RWPE1 (cell line): ENCODE measurements at regions of chr1 and their contacts with region 1.

Region 1: DNA sequence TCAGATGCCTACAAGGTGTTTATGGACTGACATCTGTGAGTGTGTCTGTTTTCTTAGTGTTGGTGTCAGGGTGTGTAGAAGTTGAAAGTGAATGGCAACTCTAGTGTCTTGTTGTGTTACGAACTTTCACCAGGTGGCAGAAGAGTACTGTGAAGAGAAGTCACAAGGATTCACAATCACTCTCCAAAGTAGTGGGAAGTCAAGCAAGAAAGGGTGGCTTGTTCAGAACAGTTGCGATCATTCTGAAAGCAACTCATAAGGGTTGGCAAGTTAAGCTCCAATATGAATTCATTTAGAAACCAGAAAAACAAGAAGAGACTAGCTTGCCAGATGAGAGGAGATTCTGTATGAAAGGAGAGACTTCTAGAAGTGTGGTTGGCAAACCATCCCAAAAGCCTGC is 86.1 kb downstream of the FASLG start:
- DNase-seq: peak; percentile 39
- H3K27ac ChIP-seq: no peak overlapping the region
- CTCF ChIP-seq: peak; percentile 71

Region 2: GRCh38 chr1:173702736-173703135 is 957.7 kb after region 1 on chr1:
- CTCF ChIA-PET with region 1: interaction called, 12 read pairs
- POLR2A ChIA-PET with region 1: no interaction called
- DNase-seq: no peak
- H3K27ac ChIP-seq: no peak overlapping the region
- CTCF ChIP-seq: no peak